ENCODE measurements at regions of chr6 and their contacts with region 1.

Region 1: DNA sequence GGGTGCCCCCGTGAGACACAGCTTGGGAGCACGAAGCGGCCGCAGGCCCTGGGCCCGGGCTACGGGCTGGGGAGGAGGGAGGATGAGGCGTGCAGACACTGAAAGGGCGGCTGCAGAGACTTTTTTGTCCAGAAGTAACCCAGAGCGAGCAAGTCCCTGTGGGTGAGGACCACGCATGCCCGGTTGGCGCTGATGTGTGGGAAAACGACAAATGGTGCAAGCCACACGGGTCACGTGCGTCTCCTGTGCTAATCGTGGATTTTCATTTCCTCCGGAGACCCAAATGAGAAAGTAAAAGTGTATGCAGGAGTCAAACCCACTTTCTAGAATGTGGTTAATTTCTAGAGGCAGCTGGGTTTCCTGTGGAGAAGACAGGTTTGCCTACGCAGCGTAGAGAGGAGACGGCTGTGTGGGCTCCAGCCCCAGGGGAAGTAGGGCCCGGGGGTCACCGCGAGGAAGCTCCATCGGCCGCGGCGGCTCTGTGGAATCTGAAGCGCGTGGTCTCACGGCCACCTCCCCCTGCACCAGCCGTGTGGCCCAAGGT is 19.0 kb downstream of the DLL1 start:
- DNase-seq: peak; percentile 70 to 93
- ATAC-seq: peak; percentile 84 to 92 (median 85)
- H3K4me3 ChIP-seq: peak overlapping the region; percentile 28
- H3K4me3 Mint-ChIP-seq: peak overlapping the region; percentile 77
- H3K27ac ChIP-seq: peak overlapping the region; percentile 48
- H3K27ac Mint-ChIP-seq: peak overlapping the region; percentile 81 to 87
- H3K4me1 ChIP-seq: peaks cover 30% of the 10 kb centered on the region
- H3K4me1 Mint-ChIP-seq: peaks cover 23 to 31% of the 10 kb centered on the region in 2 donors
- H3K27me3 ChIP-seq: peaks cover 65% of the 10 kb centered on the region
- H3K27me3 Mint-ChIP-seq: peaks cover 60 to 66% of the 10 kb centered on the region in 2 donors
- CTCF ChIP-seq: no peak

Region 2: GRCh38 chr6:169751242-169752073 is 520.4 kb before region 1 on chr6 and contains the starts of genes DYNLT2 and ERMARD:
- intact Hi-C with region 1: no loop called
- DNase-seq: peak; percentile 95 to 96
- ATAC-seq: peak; percentile 93 to 99 (median 96)
- H3K4me3 ChIP-seq: peak within 1 kb of the TSS; percentile 79
- H3K4me3 Mint-ChIP-seq: peak within 1 kb of the TSS; percentile 98
- H3K27ac ChIP-seq: peak within 1 kb of the TSS; percentile 94
- H3K27ac Mint-ChIP-seq: peak within 1 kb of the TSS; percentile 99 to 100
- H3K4me1 ChIP-seq: peaks cover 8% of the 10 kb centered on the region
- H3K4me1 Mint-ChIP-seq: peaks cover 38 to 42% of the 10 kb centered on the region in 2 donors
- H3K27me3 ChIP-seq: no peaks in the 10 kb centered on the region
- H3K27me3 Mint-ChIP-seq: peaks cover 0 to 1% of the 10 kb centered on the region in 2 donors
- CTCF ChIP-seq: no peak
- total RNA-seq, gene DYNLT2: 4.0 to 6.8 (median 5.3) TPM
- total RNA-seq, gene ERMARD: 33.9 to 42.2 (median 36.4) TPM

Region 3: GRCh38 chr6:169805242-169805838 is 466.5 kb before region 1 on chr6:
- intact Hi-C with region 1: loop called (anchors 5 kb)
- DNase-seq: peak in 1 of 2 donors; percentile 51
- ATAC-seq: peak; percentile 19 to 55 (median 40)
- H3K4me3 ChIP-seq: no peak overlapping the region
- H3K4me3 Mint-ChIP-seq: peak overlapping the region; percentile 33
- H3K27ac ChIP-seq: no peak overlapping the region
- H3K27ac Mint-ChIP-seq: peak overlapping the region; percentile 72 to 87
- H3K4me1 ChIP-seq: peaks cover 73% of the 10 kb centered on the region
- H3K4me1 Mint-ChIP-seq: peaks cover 68 to 72% of the 10 kb centered on the region in 2 donors
- H3K27me3 ChIP-seq: peaks cover 5% of the 10 kb centered on the region
- H3K27me3 Mint-ChIP-seq: peaks cover 39 to 44% of the 10 kb centered on the region in 2 donors
- CTCF ChIP-seq: no peak

Region 4: DNA sequence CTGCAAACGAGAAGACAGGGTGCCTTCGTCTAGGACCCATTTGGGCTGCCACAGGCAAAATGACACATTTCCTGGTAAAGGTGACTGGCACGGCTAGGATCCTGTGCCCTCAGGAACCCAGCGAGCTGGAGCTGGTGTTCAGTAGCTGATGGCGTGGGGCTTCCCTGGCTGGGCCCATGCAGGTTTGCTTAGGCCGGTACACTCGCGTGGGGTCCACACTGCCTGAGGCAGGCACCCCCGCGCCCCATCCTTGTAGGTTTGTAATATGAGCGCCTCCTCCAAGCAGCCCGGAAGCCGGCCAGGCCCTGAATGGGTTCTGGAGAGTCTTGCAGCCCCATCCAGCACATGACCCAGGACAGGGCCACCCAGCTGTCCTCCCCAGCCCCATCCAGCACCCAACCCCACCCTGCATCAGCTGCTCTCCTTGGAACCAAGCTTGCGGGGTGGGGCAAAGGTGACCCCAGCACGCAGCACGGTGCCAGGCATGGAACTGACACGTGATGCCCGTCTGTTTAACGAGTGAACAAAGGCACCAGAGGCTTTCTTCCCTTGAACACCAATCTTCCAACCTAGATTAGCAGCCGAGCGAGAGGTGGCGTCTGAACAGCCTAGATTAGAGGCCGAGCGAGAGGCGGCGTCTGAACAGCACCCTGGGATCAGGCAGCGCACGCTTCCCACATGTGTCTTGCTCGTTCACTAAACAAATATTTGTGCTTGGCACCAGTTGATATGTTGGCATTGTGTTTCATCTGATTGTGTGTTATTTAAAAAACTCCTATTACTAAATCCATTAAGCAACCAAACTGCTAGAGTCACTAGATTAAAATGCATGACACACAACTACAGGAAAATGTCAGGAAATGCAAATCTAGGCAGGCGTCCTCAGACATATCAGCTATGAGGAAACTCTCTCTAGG is 93.0 kb before region 1 on chr6:
- intact Hi-C with region 1: no loop called
- DNase-seq: peak in 1 of 2 donors; percentile 14
- ATAC-seq: no peak
- H3K4me3 ChIP-seq: no peak overlapping the region
- H3K4me3 Mint-ChIP-seq: no peak overlapping the region
- H3K27ac ChIP-seq: no peak overlapping the region
- H3K27ac Mint-ChIP-seq: peak overlapping the region in 1 of 2 donors; percentile 32
- H3K4me1 ChIP-seq: peaks cover 15% of the 10 kb centered on the region
- H3K4me1 Mint-ChIP-seq: peaks cover 26 to 37% of the 10 kb centered on the region in 2 donors
- H3K27me3 ChIP-seq: no peaks in the 10 kb centered on the region
- H3K27me3 Mint-ChIP-seq: peaks cover 13 to 27% of the 10 kb centered on the region in 2 donors
- CTCF ChIP-seq: no peak

Region 5: GRCh38 chr6:170306324-170307079 is 34.7 kb after region 1 on chr6 and contains the start of gene FAM120B:
- intact Hi-C with region 1: loop called (anchors 1 kb)
- DNase-seq: peak; percentile 95 to 98
- ATAC-seq: peak; percentile 94 to 98 (median 95)
- H3K4me3 ChIP-seq: peak within 1 kb of the TSS; percentile 87
- H3K4me3 Mint-ChIP-seq: peak within 1 kb of the TSS; percentile 96
- H3K27ac ChIP-seq: peak within 1 kb of the TSS; percentile 86
- H3K27ac Mint-ChIP-seq: peak within 1 kb of the TSS; percentile 92 to 93
- H3K4me1 ChIP-seq: peaks cover 25% of the 10 kb centered on the region
- H3K4me1 Mint-ChIP-seq: peaks cover 42% of the 10 kb centered on the region in 2 donors
- H3K27me3 ChIP-seq: no peaks in the 10 kb centered on the region
- H3K27me3 Mint-ChIP-seq: peaks cover 20 to 22% of the 10 kb centered on the region in 2 donors
- CTCF ChIP-seq: no peak
- total RNA-seq, gene FAM120B: 37.8 to 55.6 (median 39.9) TPM